T-cell (primary cell): ENCODE measurements at regions of chr5 and their contacts with region 1.

Region 1: DNA sequence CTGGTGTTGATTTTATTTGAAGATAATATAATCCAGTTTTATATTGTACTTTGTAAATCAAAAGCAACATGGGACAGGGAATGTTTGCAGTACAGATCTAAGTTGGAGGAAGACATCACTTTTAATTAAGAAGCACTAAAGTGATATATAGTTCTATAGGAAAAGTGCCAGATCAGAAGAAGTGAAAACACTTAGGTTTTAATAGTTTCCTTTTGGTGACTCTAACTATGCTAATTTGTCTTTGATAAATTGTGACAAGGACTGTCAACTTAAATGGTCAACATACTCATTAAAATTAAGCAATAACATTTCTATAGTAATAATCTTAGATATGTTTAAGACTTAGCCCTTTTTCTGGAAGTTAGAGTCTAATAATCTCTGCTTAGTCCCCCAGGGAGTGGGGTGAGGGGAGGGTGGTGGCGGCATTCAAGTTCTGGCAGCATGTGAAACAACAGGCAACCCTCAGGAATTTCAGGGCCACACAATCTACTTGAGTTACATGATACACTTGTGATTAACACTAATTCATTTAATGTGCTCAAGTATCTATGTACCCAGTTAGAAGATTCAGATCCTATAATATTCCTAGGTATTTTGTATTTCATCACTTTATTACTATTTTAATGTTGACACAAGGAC is 1026.5 kb downstream of the NR2F1-AS1 start:
- DNase-seq: no peak
- ATAC-seq: no peak
- H3K4me3 ChIP-seq: no peak overlapping the region
- H3K4me3 Mint-ChIP-seq: no peak overlapping the region
- H3K27ac ChIP-seq: no peak overlapping the region
- H3K27ac Mint-ChIP-seq: no peak overlapping the region
- H3K4me1 ChIP-seq: no peaks in the 10 kb centered on the region
- H3K4me1 Mint-ChIP-seq: no peaks in the 10 kb centered on the region
- H3K27me3 ChIP-seq: no peaks in the 10 kb centered on the region
- H3K27me3 Mint-ChIP-seq: no peaks in the 10 kb centered on the region

Region 2: DNA sequence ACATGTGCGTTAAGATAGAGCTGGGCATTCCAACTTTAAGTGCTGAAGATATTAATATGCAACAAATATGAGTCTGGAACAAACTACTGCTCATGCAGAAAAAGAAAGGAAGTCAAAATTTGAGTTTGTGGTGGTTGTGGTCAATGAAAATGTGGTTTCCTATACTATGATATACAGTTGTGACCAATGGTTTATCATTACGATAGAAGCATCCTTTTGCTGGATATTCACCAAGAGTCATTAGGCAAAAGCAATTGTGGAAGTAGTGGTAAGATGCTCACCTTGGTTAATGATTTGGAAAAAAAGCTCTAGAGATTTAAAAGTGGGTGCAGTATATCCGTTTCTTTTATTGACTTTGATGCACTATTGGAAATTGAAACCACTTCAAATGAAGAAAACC is 19.5 kb after region 1 on chr5:
- CTCF ChIA-PET with region 1: no interaction called
- POLR2A ChIA-PET with region 1: interaction called in 1 of 2 experiments, 10 read pairs
- DNase-seq: no peak
- ATAC-seq: no peak
- H3K4me3 ChIP-seq: no peak overlapping the region
- H3K4me3 Mint-ChIP-seq: no peak overlapping the region
- H3K27ac ChIP-seq: no peak overlapping the region
- H3K27ac Mint-ChIP-seq: no peak overlapping the region
- H3K4me1 ChIP-seq: no peaks in the 10 kb centered on the region
- H3K4me1 Mint-ChIP-seq: no peaks in the 10 kb centered on the region
- H3K27me3 ChIP-seq: no peaks in the 10 kb centered on the region
- H3K27me3 Mint-ChIP-seq: no peaks in the 10 kb centered on the region

Region 3: DNA sequence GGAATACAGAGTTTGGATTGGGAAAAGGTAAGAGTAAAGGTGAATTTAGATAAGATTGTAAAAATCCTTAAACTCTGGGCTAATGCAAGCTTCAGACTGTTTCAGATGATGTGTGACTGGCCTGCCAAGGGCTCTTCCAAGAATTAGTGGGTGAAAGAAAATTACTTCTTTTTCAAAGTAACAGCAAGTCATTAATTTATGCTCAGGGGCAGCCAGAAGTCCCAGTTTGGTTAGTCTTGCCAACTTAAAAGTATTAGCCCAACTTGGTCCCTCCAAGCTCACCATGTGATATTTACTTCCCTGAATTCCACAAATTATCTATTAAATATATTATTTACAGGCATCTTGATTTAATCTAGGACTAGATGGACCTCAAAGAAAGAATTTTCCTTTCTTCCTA is 78.6 kb after region 1 on chr5:
- CTCF ChIA-PET with region 1: no interaction called
- POLR2A ChIA-PET with region 1: no interaction called
- DNase-seq: no peak
- ATAC-seq: no peak
- H3K4me3 ChIP-seq: no peak overlapping the region
- H3K4me3 Mint-ChIP-seq: no peak overlapping the region
- H3K27ac ChIP-seq: no peak overlapping the region
- H3K27ac Mint-ChIP-seq: no peak overlapping the region
- H3K4me1 ChIP-seq: no peaks in the 10 kb centered on the region
- H3K4me1 Mint-ChIP-seq: no peaks in the 10 kb centered on the region
- H3K27me3 ChIP-seq: no peaks in the 10 kb centered on the region
- H3K27me3 Mint-ChIP-seq: no peaks in the 10 kb centered on the region